CD4-positive, alpha-beta memory T cell (primary cell): ENCODE measurements at regions of chr6 and their contacts with region 1.

Region 1: DNA sequence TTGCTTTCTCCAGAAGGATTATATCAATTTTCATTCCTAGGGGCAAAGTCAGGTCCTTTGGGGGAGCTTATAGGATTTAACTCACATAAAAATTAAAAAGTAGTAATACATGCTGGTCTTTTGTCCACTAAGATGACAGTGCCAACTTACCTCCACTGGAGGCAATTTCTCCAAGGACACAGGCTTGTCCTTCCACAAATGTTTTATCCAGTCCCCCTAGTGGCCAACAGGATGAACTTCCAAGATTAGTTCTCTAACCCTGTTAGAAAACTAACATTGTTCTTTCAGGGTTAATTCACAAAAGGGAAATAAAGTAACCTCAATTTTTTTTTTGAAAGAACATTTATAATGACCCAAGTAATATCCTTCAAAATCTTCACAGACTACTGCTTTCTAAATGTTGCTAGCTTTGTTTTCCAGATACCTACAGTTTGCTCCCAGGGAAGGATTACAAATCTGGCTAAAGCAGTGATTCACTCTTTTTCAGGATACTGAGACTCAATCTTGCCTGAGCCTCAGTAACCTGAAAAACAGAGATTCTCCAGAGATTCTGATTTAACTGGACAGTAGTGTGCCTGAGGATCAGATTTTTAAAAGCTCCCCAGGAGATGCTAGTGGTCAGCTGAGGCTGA is 31.7 kb upstream of the UBR2 start:
- DNase-seq: peak in 4 of 5 donors; percentile 36 to 48 (median 42)
- H3K4me3 ChIP-seq: no peak overlapping the region
- H3K4me3 Mint-ChIP-seq: no peak overlapping the region
- H3K27ac ChIP-seq: no peak overlapping the region
- H3K27ac Mint-ChIP-seq: no peak overlapping the region
- H3K4me1 ChIP-seq: no peaks in the 10 kb centered on the region
- H3K4me1 Mint-ChIP-seq: peaks cover 0 to 3% (median 0%) of the 10 kb centered on the region in 4 donors
- H3K27me3 ChIP-seq: no peaks in the 10 kb centered on the region
- H3K27me3 Mint-ChIP-seq: no peaks in the 10 kb centered on the region

Region 2: GRCh38 chr6:42260972-42261371 is 271.2 kb before region 1 on chr6:
- CTCF ChIA-PET with region 1: interaction called, 10 read pairs
- POLR2A ChIA-PET with region 1: no interaction called
- intact Hi-C with region 1: loop called (anchors 2 kb)
- DNase-seq: peak in 3 of 5 donors; percentile 11 to 25 (median 15)
- H3K4me3 ChIP-seq: no peak overlapping the region
- H3K4me3 Mint-ChIP-seq: peak overlapping the region in 1 of 8 donors; percentile 29
- H3K27ac ChIP-seq: no peak overlapping the region
- H3K27ac Mint-ChIP-seq: peak overlapping the region in 1 of 7 donors; percentile 82
- H3K4me1 ChIP-seq: no peaks in the 10 kb centered on the region
- H3K4me1 Mint-ChIP-seq: peaks cover 0 to 8% (median 6%) of the 10 kb centered on the region in 4 donors
- H3K27me3 ChIP-seq: no peaks in the 10 kb centered on the region
- H3K27me3 Mint-ChIP-seq: no peaks in the 10 kb centered on the region

Region 3: DNA sequence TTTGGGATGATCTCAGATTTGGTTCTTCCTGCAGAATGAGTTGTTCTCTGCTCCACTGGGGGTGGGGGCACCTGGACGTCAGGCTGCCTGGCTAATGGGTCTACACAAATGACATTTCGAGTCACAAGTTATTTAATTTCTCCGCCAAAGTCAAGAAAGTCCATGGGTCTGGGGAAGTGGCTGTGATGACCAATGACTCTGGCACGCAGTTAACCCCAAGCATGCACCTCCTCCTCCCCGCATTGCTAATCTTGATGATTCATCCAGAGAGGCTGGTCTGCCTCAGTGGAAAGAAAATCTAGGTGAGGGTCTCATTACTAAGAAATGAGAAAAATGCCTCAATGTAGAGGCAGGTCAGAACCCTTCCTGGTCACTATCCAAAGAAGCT is 216.2 kb before region 1 on chr6:
- CTCF ChIA-PET with region 1: interaction called, 35 read pairs
- POLR2A ChIA-PET with region 1: no interaction called
- intact Hi-C with region 1: no loop called
- DNase-seq: no peak
- H3K4me3 ChIP-seq: no peak overlapping the region
- H3K4me3 Mint-ChIP-seq: no peak overlapping the region
- H3K27ac ChIP-seq: no peak overlapping the region
- H3K27ac Mint-ChIP-seq: peak overlapping the region in 4 of 7 donors; percentile 37 to 72 (median 57)
- H3K4me1 ChIP-seq: peaks cover 36% of the 10 kb centered on the region
- H3K4me1 Mint-ChIP-seq: peaks cover 45 to 63% (median 56%) of the 10 kb centered on the region in 4 donors
- H3K27me3 ChIP-seq: no peaks in the 10 kb centered on the region
- H3K27me3 Mint-ChIP-seq: no peaks in the 10 kb centered on the region

Region 4: GRCh38 chr6:42493914-42494539 is 38.1 kb before region 1 on chr6:
- CTCF ChIA-PET with region 1: interaction called, 10 read pairs
- POLR2A ChIA-PET with region 1: no interaction called
- intact Hi-C with region 1: no loop called
- DNase-seq: no peak
- H3K4me3 ChIP-seq: no peak overlapping the region
- H3K4me3 Mint-ChIP-seq: no peak overlapping the region
- H3K27ac ChIP-seq: no peak overlapping the region
- H3K27ac Mint-ChIP-seq: no peak overlapping the region
- H3K4me1 ChIP-seq: no peaks in the 10 kb centered on the region
- H3K4me1 Mint-ChIP-seq: no peaks in the 10 kb centered on the region
- H3K27me3 ChIP-seq: no peaks in the 10 kb centered on the region
- H3K27me3 Mint-ChIP-seq: peaks cover 2% of the 10 kb centered on the region in 2 donors